Activated CD4-positive, alpha-beta T cell treated with anti-CD3 and anti-CD28 coated beads, Interleukin-2, amount 10 ng/mL, durations not matched to agents 24 days and 14 days (primary cell): ENCODE measurements at regions of chr11 and their contacts with region 1.

Region 1: DNA sequence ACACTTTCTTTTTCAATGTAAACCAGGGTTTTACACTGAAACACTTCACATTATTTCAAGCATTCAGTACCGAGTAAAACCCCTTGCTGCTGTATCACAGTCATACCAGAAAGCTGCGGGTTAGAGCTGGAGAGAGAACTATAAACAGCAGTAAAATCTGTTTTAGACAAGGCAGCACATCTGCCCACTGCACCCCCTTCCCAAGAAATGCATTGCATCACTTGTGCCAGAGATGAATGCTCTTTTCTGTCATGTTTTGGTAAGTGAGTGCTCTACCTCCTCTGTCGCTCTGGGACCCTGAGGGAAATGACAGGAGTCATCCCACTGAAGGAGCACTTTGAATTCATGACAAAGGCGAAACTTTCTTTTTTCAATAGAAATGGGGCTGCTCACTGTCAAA is 107.2 kb downstream of the MAML2 start:
- DNase-seq: peak; percentile 86
- H3K4me3 Mint-ChIP-seq: peak overlapping the region; percentile 76
- H3K27ac Mint-ChIP-seq: peak overlapping the region; percentile 95
- H3K4me1 Mint-ChIP-seq: peaks cover 30% of the 10 kb centered on the region
- H3K27me3 Mint-ChIP-seq: no peaks in the 10 kb centered on the region

Region 2: GRCh38 chr11:95790123-95790932 is 445.4 kb before region 1 on chr11 and contains the start of gene CEP57:
- intact Hi-C with region 1: no loop called
- DNase-seq: peak; percentile 98
- H3K4me3 Mint-ChIP-seq: peak within 1 kb of the TSS; percentile 98
- H3K27ac Mint-ChIP-seq: peak within 1 kb of the TSS; percentile 100
- H3K4me1 Mint-ChIP-seq: peaks cover 45% of the 10 kb centered on the region
- H3K27me3 Mint-ChIP-seq: no peaks in the 10 kb centered on the region
- total RNA-seq, gene CEP57: 75.7 and 87.6 TPM in 2 replicates

Region 3: GRCh38 chr11:96062134-96062533 is 173.6 kb before region 1 on chr11:
- intact Hi-C with region 1: loop called (anchors 2 kb)
- DNase-seq: peak; percentile 70
- H3K4me3 Mint-ChIP-seq: peak overlapping the region; percentile 11
- H3K27ac Mint-ChIP-seq: peak overlapping the region; percentile 86
- H3K4me1 Mint-ChIP-seq: peaks cover 43% of the 10 kb centered on the region
- H3K27me3 Mint-ChIP-seq: no peaks in the 10 kb centered on the region

Region 4: DNA sequence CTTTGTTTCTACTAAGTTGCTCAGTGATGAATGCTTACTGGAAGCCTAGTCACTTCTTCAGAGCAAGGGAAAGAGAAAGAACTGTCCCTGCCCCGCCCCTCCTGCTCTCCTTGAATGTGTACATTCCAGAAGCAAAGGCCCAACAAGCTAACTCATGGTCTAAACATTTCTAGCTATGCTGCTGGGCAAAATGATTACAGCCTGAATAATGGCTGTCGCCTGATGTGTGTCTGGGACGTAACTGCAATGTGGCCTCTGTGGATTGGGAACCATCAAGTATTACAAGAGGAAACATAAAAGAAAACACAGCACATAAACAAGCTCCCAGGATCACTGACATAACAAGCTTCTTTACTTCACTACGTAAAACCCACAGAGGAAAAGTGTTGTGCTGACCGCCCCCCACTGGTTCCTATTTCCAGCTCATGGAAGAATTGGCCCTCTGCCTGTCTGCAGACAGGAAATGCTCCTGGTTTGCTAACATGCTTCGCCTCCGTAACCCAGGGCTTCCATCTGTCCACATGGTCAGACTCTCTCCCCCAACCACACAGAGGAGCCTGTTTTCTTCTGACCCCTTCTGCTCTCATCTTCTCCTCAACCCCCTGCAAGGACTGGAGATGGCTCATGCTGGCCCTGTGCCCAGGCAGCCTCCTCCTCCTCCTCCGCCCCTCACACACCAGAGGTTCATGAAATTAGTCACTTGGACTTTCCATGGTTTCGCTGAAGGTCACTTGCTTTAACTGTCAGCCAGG is 79.9 kb before region 1 on chr11:
- intact Hi-C with region 1: loop called (anchors 1 kb)
- DNase-seq: peak; percentile 79
- H3K4me3 Mint-ChIP-seq: peak overlapping the region; percentile 65
- H3K27ac Mint-ChIP-seq: peak overlapping the region; percentile 95
- H3K4me1 Mint-ChIP-seq: peaks cover 54% of the 10 kb centered on the region
- H3K27me3 Mint-ChIP-seq: no peaks in the 10 kb centered on the region

Region 5: GRCh38 chr11:96215110-96215782 is 20.5 kb before region 1 on chr11:
- intact Hi-C with region 1: loop called (anchors 2 kb)
- DNase-seq: peak; percentile 79
- H3K4me3 Mint-ChIP-seq: peak overlapping the region; percentile 77
- H3K27ac Mint-ChIP-seq: peak overlapping the region; percentile 96
- H3K4me1 Mint-ChIP-seq: peaks cover 57% of the 10 kb centered on the region
- H3K27me3 Mint-ChIP-seq: no peaks in the 10 kb centered on the region

Region 6: DNA sequence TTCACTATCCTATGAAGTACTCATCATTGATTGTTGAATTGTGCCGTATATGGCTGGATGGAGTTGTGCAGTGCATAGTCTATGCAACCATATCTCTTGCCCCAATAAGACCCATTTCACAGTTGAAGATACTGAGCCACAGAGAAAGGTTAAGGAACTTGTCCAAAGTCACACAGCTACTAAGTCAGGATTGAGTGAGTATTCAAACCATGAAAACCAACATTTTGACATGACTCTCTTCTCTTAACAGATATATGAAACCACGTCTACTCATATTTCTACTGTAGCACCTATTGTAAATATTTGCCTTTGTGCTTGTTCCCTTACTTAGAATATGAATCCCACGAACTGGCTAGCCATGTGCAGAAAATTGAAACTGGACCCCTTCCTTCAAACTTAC is 49.2 kb after region 1 on chr11:
- intact Hi-C with region 1: loop called (anchors 2 kb)
- DNase-seq: no peak
- H3K4me3 Mint-ChIP-seq: no peak overlapping the region
- H3K27ac Mint-ChIP-seq: peak overlapping the region; percentile 25
- H3K4me1 Mint-ChIP-seq: peaks cover 40% of the 10 kb centered on the region
- H3K27me3 Mint-ChIP-seq: no peaks in the 10 kb centered on the region

Region 7: GRCh38 chr11:97048481-97048880 is 812.7 kb after region 1 on chr11:
- intact Hi-C with region 1: no loop called
- DNase-seq: no peak
- H3K4me3 Mint-ChIP-seq: no peak overlapping the region
- H3K27ac Mint-ChIP-seq: no peak overlapping the region
- H3K4me1 Mint-ChIP-seq: no peaks in the 10 kb centered on the region
- H3K27me3 Mint-ChIP-seq: no peaks in the 10 kb centered on the region